Panc1 (cell line): ENCODE measurements at regions of chrX and their contacts with region 1.

Region 1: DNA sequence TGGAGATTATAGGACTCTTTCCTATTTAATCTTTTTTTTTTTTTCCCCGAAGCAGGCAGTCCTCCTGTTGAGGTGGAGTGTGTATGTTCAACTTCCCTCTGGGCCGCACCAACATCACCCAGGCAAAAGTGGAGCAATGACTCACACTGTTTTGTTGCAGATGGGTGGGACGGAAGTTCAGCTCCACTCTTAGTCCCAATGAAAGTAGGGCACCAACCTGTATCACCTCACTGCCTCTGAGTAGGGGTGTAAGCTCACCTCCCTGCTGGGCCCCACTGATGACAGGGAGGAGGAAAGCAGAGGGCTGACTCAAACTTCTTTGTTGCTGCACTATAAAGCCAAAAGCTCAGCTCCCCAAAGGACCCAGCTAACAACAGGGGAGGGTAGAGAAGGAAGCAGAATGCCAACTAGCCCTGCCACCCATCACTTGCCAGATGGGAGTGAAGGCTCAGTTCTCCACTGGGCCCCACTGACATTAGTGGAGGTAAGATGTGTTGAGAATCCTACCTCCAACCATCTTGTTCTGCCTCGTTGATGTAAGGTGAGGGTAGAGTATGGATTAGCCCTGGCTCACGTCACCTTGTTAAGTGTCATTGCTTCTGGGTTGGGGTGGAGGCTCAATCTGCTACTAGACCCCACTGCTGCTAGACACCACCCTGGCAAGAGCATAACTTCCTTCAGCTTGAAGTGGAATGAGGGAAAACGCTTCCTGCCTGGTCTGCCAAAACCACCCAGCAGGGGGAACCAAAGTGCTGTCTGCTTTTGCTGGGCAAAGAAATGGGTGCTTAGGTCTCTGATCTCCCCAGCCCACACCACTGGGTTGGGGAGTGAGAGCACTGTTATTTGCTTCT is 14.1 kb downstream of the RPS6KA3 start:
- DNase-seq: no peak
- ATAC-seq: peak; percentile 77; the same call in 1 of the 2 replicates
- H3K4me3 ChIP-seq: no peak overlapping the region
- H3K27ac ChIP-seq: no peak overlapping the region
- H3K4me1 ChIP-seq: no peaks in the 10 kb centered on the region
- H3K27me3 ChIP-seq: no peaks in the 10 kb centered on the region
- CTCF ChIP-seq: peak; percentile 70

Region 2: GRCh38 chrX:20285513-20285912 is 32.9 kb after region 1 on chrX:
- CTCF ChIA-PET with region 1: no interaction called
- POLR2A ChIA-PET with region 1: interaction called, 10 read pairs
- in situ Hi-C with region 1: no loop called
- intact Hi-C with region 1: no loop called
- DNase-seq: no peak
- ATAC-seq: no peak
- H3K4me3 ChIP-seq: no peak overlapping the region
- H3K27ac ChIP-seq: no peak overlapping the region
- H3K4me1 ChIP-seq: no peaks in the 10 kb centered on the region
- H3K27me3 ChIP-seq: no peaks in the 10 kb centered on the region
- CTCF ChIP-seq: no peak

Region 3: DNA sequence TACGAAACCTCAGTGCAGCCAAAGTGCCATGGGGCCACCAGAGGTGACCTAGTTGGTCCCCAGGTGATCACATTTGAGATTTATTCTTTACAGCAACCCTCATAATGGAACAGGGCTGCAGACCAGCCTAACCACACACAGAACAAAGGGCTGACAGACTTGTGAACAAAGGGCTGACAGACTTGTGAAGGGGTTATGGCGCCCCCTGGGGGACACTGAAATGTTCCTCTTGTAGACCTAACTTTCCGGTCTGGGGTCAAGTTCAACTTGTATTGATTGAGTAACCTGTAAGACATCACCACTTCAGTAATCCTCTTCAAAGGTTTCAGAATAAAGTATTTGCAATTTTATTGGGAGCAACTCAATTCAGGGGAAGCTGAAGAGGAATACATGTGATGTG is 190.0 kb after region 1 on chrX:
- CTCF ChIA-PET with region 1: interaction called, 3 read pairs
- POLR2A ChIA-PET with region 1: no interaction called
- in situ Hi-C with region 1: no loop called
- intact Hi-C with region 1: loop called (anchors 2 kb)
- DNase-seq: peak; percentile 32
- ATAC-seq: peak; percentile 70; the same call in 1 of the 2 replicates
- H3K4me3 ChIP-seq: no peak overlapping the region
- H3K27ac ChIP-seq: no peak overlapping the region
- H3K4me1 ChIP-seq: no peaks in the 10 kb centered on the region
- H3K27me3 ChIP-seq: no peaks in the 10 kb centered on the region
- CTCF ChIP-seq: peak; percentile 74